CD4-positive, alpha-beta memory T cell (primary cell): ENCODE measurements at regions of chr9 and their contacts with region 1.

Region 1: GRCh38 chr9:128863647-128864046 is 18.1 kb downstream of the KYAT1 start:
- DNase-seq: peak; percentile 76 to 81 (median 78)
- H3K4me3 ChIP-seq: no peak overlapping the region
- H3K4me3 Mint-ChIP-seq: no peak overlapping the region
- H3K27ac ChIP-seq: no peak overlapping the region
- H3K27ac Mint-ChIP-seq: peak overlapping the region in 2 of 7 donors; percentile 59 to 63
- H3K4me1 ChIP-seq: peaks cover 9% of the 10 kb centered on the region
- H3K4me1 Mint-ChIP-seq: peaks cover 3 to 6% (median 5%) of the 10 kb centered on the region in 4 donors
- H3K27me3 ChIP-seq: no peaks in the 10 kb centered on the region
- H3K27me3 Mint-ChIP-seq: no peaks in the 10 kb centered on the region

Region 2: GRCh38 chr9:128643519-128644300 is 219.9 kb before region 1 on chr9:
- CTCF ChIA-PET with region 1: interaction called, 7 read pairs
- POLR2A ChIA-PET with region 1: no interaction called
- intact Hi-C with region 1: loop called (anchors 2 kb)
- DNase-seq: no peak
- H3K4me3 ChIP-seq: no peak overlapping the region
- H3K4me3 Mint-ChIP-seq: no peak overlapping the region
- H3K27ac ChIP-seq: no peak overlapping the region
- H3K27ac Mint-ChIP-seq: peak overlapping the region in 1 of 7 donors; percentile 19
- H3K4me1 ChIP-seq: no peaks in the 10 kb centered on the region
- H3K4me1 Mint-ChIP-seq: peaks cover 0 to 3% (median 0%) of the 10 kb centered on the region in 4 donors
- H3K27me3 ChIP-seq: no peaks in the 10 kb centered on the region
- H3K27me3 Mint-ChIP-seq: no peaks in the 10 kb centered on the region

Region 3: DNA sequence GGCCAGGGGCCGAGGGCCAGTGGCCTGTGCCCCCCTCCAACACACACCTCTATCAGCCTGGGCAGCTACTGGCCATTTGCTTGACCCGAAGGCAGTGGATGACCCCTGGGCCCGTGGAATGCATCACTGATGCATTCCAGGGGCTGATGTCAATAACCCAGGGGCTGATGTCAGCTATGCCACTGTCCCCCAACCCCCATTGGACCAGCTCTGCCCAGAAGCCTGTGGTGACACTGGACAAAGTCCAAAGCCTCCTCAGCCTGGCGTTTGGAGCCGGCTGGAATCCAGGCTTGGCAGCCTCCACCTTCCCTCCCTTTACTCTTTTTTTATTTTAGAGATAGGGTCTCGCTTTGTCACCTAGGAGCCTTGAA is 12.1 kb after region 1 on chr9:
- CTCF ChIA-PET with region 1: interaction called, 35 read pairs
- POLR2A ChIA-PET with region 1: interaction called, 4 read pairs
- intact Hi-C with region 1: loop called (anchors 2 kb)
- DNase-seq: no peak
- H3K4me3 ChIP-seq: no peak overlapping the region
- H3K4me3 Mint-ChIP-seq: no peak overlapping the region
- H3K27ac ChIP-seq: no peak overlapping the region
- H3K27ac Mint-ChIP-seq: no peak overlapping the region
- H3K4me1 ChIP-seq: peaks cover 3% of the 10 kb centered on the region
- H3K4me1 Mint-ChIP-seq: peaks cover 5 to 20% (median 9%) of the 10 kb centered on the region in 4 donors
- H3K27me3 ChIP-seq: no peaks in the 10 kb centered on the region
- H3K27me3 Mint-ChIP-seq: no peaks in the 10 kb centered on the region